H1 (cell line): ENCODE measurements at regions of chr16 and their contacts with region 1.

Region 1: GRCh38 chr16:760545-761343 is at the start of gene MSLN:
- DNase-seq: no peak
- H3K4me3 ChIP-seq: no peak within 1 kb of the TSS
- H3K27ac ChIP-seq: no peak within 1 kb of the TSS
- H3K4me1 ChIP-seq: peaks cover 0 to 2% (median 0%) of the 10 kb centered on the region in 4 experiments; a peak in 1 of 7 replicates
- H3K27me3 ChIP-seq: no peaks in the 10 kb centered on the region
- CTCF ChIP-seq: no peak
- EP300 ChIP-seq: no peak
- POLR2A ChIP-seq: no peak
- RAD21 ChIP-seq: no peak
- total RNA-seq, gene MSLN: 0.28 TPM in 1 of 2 replicates, not detected in the other

Region 2: DNA sequence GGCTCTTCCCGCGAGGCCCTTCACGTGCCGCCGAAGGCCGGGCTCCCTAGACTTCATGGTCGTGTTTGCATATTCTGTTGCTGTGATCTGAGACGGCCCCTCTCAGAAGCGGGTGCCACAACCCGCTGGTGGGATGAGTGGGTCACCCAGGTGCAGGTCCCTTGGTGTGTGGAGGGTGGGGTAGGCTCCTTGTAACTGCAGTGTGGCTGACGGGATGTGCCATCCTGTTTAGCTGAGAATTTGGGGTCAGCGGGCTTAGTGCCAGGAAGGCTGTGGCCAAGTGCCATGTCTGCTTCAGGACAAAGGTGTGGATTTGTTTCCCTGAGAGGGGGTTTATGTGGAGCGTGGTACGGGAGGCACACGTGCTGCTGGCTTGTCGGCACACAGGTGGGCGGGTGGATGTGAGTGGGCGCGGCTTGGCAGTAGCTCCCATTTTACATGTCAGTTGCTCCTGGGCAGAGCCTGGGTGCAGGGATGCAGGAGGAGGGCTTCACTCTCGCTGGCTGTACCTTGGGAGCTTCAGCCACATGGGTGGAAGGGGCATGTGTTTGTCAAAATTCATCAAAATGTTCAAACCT is 139.1 kb before region 1 on chr16:
- CTCF ChIA-PET with region 1: no interaction called
- POLR2A ChIA-PET with region 1: no interaction called
- DNase-seq: no peak
- H3K4me3 ChIP-seq: no peak overlapping the region
- H3K27ac ChIP-seq: no peak overlapping the region
- H3K4me1 ChIP-seq: peaks cover 0 to 14% (median 5%) of the 10 kb centered on the region in 4 experiments; a peak in 5 of 7 replicates
- H3K27me3 ChIP-seq: no peaks in the 10 kb centered on the region
- CTCF ChIP-seq: no peak
- EP300 ChIP-seq: no peak
- POLR2A ChIP-seq: no peak
- RAD21 ChIP-seq: no peak

Region 3: GRCh38 chr16:700684-701584 is 59.8 kb before region 1 on chr16:
- CTCF ChIA-PET with region 1: no interaction called
- POLR2A ChIA-PET with region 1: no interaction called
- DNase-seq: peak in 1 of 2 experiments; percentile 92
- H3K4me3 ChIP-seq: peak overlapping the region in 1 of 4 experiments; percentile 33; a peak in 2 of 8 replicates
- H3K27ac ChIP-seq: no peak overlapping the region
- H3K4me1 ChIP-seq: peaks cover 0 to 6% (median 1%) of the 10 kb centered on the region in 4 experiments; a peak in 3 of 7 replicates
- H3K27me3 ChIP-seq: peaks cover 45 to 80% (median 72%) of the 10 kb centered on the region in 4 experiments
- CTCF ChIP-seq: 0 out of 4 replicates have a peak, but pooled peaks of 1 of the 3 experiments have one; percentile 3
- EP300 ChIP-seq: no peak
- POLR2A ChIP-seq: no peak
- RAD21 ChIP-seq: peak in 1 of 2 experiments; percentile 1; a peak in 1 of 4 replicates

Region 4: GRCh38 chr16:749001-749400 is 11.7 kb before region 1 on chr16:
- CTCF ChIA-PET with region 1: interaction called, 38 read pairs
- POLR2A ChIA-PET with region 1: interaction called, 8 read pairs
- DNase-seq: no peak
- H3K4me3 ChIP-seq: no peak overlapping the region
- H3K27ac ChIP-seq: no peak overlapping the region
- H3K4me1 ChIP-seq: peaks cover 3 to 12% (median 5%) of the 10 kb centered on the region in 4 experiments; a peak in 5 of 7 replicates
- H3K27me3 ChIP-seq: no peaks in the 10 kb centered on the region
- CTCF ChIP-seq: no peak
- EP300 ChIP-seq: no peak
- POLR2A ChIP-seq: no peak
- RAD21 ChIP-seq: no peak

Region 5: GRCh38 chr16:807347-808084 is 46.8 kb after region 1 on chr16:
- CTCF ChIA-PET with region 1: no interaction called
- POLR2A ChIA-PET with region 1: no interaction called
- DNase-seq: peak; percentile 76 to 89
- H3K4me3 ChIP-seq: peak overlapping the region; percentile 65 to 79 (median 76)
- H3K27ac ChIP-seq: peak overlapping the region; percentile 56; the same call in 1 of the 2 replicates
- H3K4me1 ChIP-seq: peaks cover 0 to 4% (median 2%) of the 10 kb centered on the region in 4 experiments; a peak in 6 of 7 replicates
- H3K27me3 ChIP-seq: peaks cover under 1 to 27% (median 19%) of the 10 kb centered on the region in 4 experiments
- CTCF ChIP-seq: peak in 1 of 3 experiments; percentile 12; a peak in 1 of 4 replicates
- EP300 ChIP-seq: 0 out of 3 replicates have a peak, but pooled peaks of 1 of the 2 experiments have one; percentile 37
- POLR2A ChIP-seq: peak in 1 of 2 experiments; percentile 32; a peak in 1 of 3 replicates
- RAD21 ChIP-seq: no peak